ENCODE measurements at regions of chr5 and their contacts with region 1.

Region 1: DNA sequence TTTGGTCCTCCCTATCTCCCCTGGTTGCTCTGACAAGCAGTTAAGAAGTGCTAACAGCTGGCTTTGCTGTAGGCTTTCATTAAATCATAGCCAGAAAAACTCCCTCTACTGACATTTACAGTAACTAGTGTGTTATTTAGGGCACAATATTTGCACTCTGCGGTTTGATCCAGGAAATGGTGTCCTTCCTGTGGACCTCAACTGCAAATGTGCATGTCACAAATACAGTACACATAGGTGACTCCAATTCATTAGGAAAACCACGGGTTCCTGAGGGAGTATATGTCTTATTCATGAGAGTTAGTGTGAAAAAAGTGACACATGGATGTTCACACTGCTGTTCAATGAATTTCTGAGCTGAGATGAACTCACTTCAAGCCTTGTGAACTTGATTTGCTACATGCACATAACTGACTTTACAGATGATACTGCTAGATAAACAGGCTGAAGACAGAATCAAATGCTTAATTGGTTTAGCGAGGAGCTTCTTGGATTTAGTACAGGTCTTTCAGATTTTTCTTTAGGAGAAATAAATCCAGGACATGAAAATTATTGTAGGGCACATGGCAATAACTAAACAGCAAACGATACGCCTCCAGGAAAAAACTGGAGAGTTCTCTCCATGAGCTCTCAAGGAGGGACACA is 281.5 kb downstream of the EFNA5 start:
- DNase-seq: no peak
- H3K4me3 ChIP-seq: no peak overlapping the region
- H3K27ac ChIP-seq: peak overlapping the region; percentile 82 to 94
- H3K4me1 ChIP-seq: peaks cover 31% of the 10 kb centered on the region in 2 experiments
- H3K27me3 ChIP-seq: no peaks in the 10 kb centered on the region
- CTCF ChIP-seq: peak; percentile 28
- EP300 ChIP-seq: peak in 1 of 2 experiments; percentile 77; a peak in 2 of 4 replicates
- RAD21 ChIP-seq: peak; percentile 35

Region 2: DNA sequence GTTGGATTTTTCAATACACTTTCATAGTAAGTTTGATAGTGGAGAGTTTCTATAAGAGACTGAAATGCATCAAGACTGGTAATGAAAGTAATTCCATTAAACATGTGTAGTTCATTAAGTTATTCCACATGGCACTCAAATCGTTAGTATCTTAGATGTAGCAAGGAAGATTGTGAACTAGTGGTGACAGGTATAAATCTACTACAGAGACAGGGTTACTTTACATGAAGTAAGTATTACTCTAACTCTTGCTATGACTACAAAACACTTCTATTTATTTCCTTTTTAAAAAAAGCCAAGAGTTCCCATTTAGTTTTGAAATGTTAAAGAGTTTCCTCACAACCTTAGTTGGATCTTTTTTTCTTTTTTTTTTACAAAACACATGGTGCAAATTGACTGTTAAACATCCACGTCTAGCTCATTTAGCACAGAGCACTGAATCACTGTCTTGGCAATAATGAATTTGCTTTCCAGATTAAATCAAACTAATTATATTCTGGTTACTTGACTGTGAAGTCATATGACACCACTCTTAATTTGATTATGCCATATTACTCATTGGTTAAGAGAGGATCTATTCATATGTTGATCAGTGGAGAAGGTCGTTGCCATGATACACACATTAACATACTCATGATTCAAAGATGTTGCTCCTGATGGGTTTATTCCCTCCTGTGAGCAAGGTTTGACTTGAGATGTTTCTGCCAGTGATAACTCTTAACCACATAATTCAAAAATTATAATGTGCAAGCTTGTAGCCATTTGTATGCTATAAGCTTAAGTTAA is 363.3 kb before region 1 on chr5:
- CTCF ChIA-PET with region 1: no interaction called
- POLR2A ChIA-PET with region 1: no interaction called
- DNase-seq: no peak
- H3K4me3 ChIP-seq: no peak overlapping the region
- H3K27ac ChIP-seq: no peak overlapping the region
- H3K4me1 ChIP-seq: no peaks in the 10 kb centered on the region; a peak in 1 of 4 replicates
- H3K27me3 ChIP-seq: no peaks in the 10 kb centered on the region
- CTCF ChIP-seq: no peak
- EP300 ChIP-seq: peak in 1 of 2 experiments; percentile 15; a peak in 1 of 4 replicates
- RAD21 ChIP-seq: no peak

Region 3: DNA sequence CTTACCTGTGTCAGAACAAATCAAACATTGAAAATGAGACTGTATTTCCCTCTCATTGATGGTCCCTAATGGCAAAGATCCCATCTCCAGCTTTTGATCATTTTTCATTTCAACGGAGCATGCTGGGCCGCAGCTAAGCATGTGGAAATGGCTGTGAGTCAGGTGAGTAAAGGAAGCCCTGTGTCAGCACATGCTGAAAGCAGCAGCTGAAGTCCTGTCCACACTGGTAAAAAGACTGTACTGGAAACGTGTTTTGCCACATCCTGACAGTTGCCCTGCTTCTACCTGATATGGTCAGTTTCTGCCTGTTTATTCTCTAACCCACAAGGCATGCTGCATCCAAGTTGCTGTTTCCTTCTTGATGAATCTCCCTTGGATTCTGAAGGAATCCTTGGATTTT is 48.6 kb before region 1 on chr5:
- CTCF ChIA-PET with region 1: no interaction called
- POLR2A ChIA-PET with region 1: no interaction called
- DNase-seq: no peak
- H3K4me3 ChIP-seq: no peak overlapping the region
- H3K27ac ChIP-seq: no peak overlapping the region
- H3K4me1 ChIP-seq: peaks cover 0 to 2% of the 10 kb centered on the region in 2 experiments; a peak in 1 of 4 replicates
- H3K27me3 ChIP-seq: no peaks in the 10 kb centered on the region
- CTCF ChIP-seq: no peak
- EP300 ChIP-seq: no peak
- RAD21 ChIP-seq: no peak

Region 4: DNA sequence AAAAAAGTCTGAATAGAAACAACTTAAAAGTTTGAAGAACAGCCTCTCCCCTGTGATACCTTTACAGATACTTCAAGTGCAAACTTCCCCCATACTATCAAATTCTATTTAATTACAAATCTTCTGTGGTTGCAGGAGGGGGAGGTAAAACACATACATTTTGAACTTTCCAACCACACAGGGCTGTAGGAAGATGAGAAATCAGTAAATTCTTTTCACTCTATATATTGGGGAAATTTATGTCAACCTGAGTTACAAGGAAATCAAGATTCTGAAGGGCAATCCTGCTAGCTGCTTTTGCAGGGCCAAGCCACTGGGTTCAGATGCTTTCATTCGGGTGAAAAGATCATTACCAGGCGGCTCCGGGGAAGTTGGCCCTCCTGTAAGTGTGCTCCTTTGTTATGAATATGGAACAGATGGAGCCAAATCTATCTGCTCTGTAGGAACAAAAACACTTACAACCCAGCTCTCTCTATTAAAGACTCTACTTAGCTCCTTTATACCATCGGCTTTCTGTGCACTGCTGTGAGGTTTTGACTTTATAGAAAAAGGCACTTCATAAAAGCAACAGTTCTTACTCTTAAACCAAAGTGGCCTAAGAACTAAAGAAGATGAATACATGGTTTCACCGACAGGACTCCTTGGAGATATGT is 12.3 kb after region 1 on chr5:
- CTCF ChIA-PET with region 1: interaction called, 12 read pairs
- POLR2A ChIA-PET with region 1: no interaction called
- DNase-seq: no peak
- H3K4me3 ChIP-seq: no peak overlapping the region
- H3K27ac ChIP-seq: peak overlapping the region in 1 of 2 experiments; percentile 34; a peak in 2 of 4 replicates
- H3K4me1 ChIP-seq: peaks cover 8 to 18% of the 10 kb centered on the region in 2 experiments; a peak in 3 of 4 replicates
- H3K27me3 ChIP-seq: no peaks in the 10 kb centered on the region
- CTCF ChIP-seq: no peak
- EP300 ChIP-seq: no peak
- RAD21 ChIP-seq: no peak

Measured in SK-N-SH (cell line).